Activated CD4-positive, alpha-beta T cell treated with anti-CD3 and anti-CD28 coated beads for 36 hours (primary cell): ENCODE measurements at regions of chr18 and their contacts with region 1.

Region 1: GRCh38 chr18:62637807-62638687 is 77.3 kb upstream of the PHLPP1 start:
- DNase-seq: peak; percentile 77
- ATAC-seq: peak; percentile 83
- H3K4me3 Mint-ChIP-seq: no peak overlapping the region
- H3K27ac Mint-ChIP-seq: no peak overlapping the region
- H3K4me1 Mint-ChIP-seq: peaks cover 4% of the 10 kb centered on the region
- H3K27me3 Mint-ChIP-seq: peaks cover 13% of the 10 kb centered on the region

Region 2: DNA sequence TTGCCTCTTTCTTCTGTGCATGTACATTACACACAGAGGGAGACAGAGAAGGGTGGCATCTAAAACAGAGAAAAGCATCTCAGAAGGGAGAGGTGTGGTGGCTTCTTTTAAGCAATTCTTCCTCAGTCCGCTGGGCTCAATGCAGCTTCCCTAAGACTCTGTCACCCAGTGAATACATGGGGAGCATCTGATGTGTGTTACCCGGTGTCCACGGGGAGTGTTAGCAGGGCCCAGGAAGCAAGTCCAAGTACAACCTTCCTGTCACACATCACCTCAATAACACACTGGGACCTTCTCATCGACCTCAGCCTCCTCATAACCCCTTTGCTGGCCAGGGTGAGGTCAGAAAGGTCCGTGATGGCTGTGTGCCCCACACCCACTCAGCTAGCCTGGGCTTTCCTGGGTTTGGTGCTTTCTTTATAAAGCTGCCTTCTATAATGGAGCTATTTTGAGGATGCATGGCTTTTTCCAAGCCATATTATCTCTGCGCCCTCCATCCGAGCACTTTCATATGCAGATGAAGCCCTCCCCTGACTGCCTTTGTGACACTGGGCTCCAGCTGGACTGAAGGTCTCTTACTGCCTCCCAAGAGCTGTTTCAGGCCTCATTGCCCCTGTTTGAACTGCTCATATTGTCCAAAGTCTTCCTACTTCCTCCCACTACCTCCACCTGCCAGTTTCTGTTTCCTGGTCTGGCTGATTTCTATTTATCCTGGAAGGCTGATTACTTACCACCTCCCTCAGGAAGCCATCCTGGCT is 291.5 kb before region 1 on chr18:
- CTCF ChIA-PET with region 1: no interaction called
- POLR2A ChIA-PET with region 1: no interaction called
- intact Hi-C with region 1: no loop called
- DNase-seq: no peak
- ATAC-seq: no peak
- H3K4me3 Mint-ChIP-seq: no peak overlapping the region
- H3K27ac Mint-ChIP-seq: no peak overlapping the region
- H3K4me1 Mint-ChIP-seq: peaks cover 9% of the 10 kb centered on the region
- H3K27me3 Mint-ChIP-seq: peaks cover 9% of the 10 kb centered on the region

Region 3: GRCh38 chr18:62625019-62625418 is 13.0 kb before region 1 on chr18:
- CTCF ChIA-PET with region 1: no interaction called
- POLR2A ChIA-PET with region 1: no interaction called
- intact Hi-C with region 1: no loop called
- DNase-seq: no peak
- ATAC-seq: no peak
- H3K4me3 Mint-ChIP-seq: no peak overlapping the region
- H3K27ac Mint-ChIP-seq: no peak overlapping the region
- H3K4me1 Mint-ChIP-seq: no peaks in the 10 kb centered on the region
- H3K27me3 Mint-ChIP-seq: no peaks in the 10 kb centered on the region

Region 4: DNA sequence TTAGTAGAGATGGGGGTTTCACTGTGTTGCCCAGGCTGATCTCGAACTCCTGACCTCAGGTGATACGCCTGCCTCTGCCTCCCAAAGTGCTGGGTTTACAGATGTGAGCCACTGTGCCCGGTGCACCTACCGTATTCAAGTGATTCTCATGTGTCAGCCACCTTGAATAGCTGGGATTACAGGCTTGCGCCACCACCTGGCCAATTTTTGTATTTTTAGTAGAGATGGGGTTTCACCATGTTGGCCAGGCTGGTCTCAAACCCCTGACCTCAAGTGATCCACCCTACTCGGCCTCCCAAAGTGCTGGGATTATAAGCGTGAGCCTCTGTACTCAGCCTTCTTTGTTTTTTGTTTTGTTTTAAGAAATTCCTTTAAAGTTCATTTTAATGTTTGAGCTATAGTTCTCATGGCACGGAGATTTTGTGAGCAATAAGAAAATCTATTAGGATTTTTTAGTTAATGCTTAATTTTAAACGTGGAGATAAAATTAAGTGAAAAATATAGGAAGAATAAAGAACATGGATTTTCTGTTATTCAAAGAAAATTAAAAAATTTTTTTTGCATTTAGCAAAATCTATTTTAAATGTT is 319.9 kb after region 1 on chr18:
- CTCF ChIA-PET with region 1: interaction called, 12 read pairs
- POLR2A ChIA-PET with region 1: no interaction called
- intact Hi-C with region 1: loop called in 1 of 2 experiments (anchors 1 kb)
- DNase-seq: peak; percentile 74
- ATAC-seq: peak; percentile 84
- H3K4me3 Mint-ChIP-seq: no peak overlapping the region
- H3K27ac Mint-ChIP-seq: no peak overlapping the region
- H3K4me1 Mint-ChIP-seq: peaks cover 9% of the 10 kb centered on the region
- H3K27me3 Mint-ChIP-seq: no peaks in the 10 kb centered on the region

Region 5: GRCh38 chr18:63444567-63444966 is 806.5 kb after region 1 on chr18:
- CTCF ChIA-PET with region 1: no interaction called
- POLR2A ChIA-PET with region 1: no interaction called
- intact Hi-C with region 1: loop called in 1 of 2 experiments (anchors 5 kb)
- DNase-seq: no peak
- ATAC-seq: peak; percentile 74
- H3K4me3 Mint-ChIP-seq: no peak overlapping the region
- H3K27ac Mint-ChIP-seq: no peak overlapping the region
- H3K4me1 Mint-ChIP-seq: no peaks in the 10 kb centered on the region
- H3K27me3 Mint-ChIP-seq: no peaks in the 10 kb centered on the region